Activated CD4-positive, alpha-beta memory T cell treated with anti-CD3 and anti-CD28 coated beads, Interleukin-2, amount 10 ng/mL, durations not matched to agents 7 days and 5 days (primary cell): ENCODE measurements at regions of chr3 and their contacts with region 1.

Region 1: GRCh38 chr3:141487521-141488252 is 860 bp downstream of the RASA2 start:
- DNase-seq: peak; percentile 94
- H3K4me3 Mint-ChIP-seq: peak overlapping the region; percentile 87
- H3K27ac Mint-ChIP-seq: peak overlapping the region; percentile 96
- H3K4me1 Mint-ChIP-seq: peaks cover 70% of the 10 kb centered on the region
- H3K27me3 Mint-ChIP-seq: no peaks in the 10 kb centered on the region

Region 2: DNA sequence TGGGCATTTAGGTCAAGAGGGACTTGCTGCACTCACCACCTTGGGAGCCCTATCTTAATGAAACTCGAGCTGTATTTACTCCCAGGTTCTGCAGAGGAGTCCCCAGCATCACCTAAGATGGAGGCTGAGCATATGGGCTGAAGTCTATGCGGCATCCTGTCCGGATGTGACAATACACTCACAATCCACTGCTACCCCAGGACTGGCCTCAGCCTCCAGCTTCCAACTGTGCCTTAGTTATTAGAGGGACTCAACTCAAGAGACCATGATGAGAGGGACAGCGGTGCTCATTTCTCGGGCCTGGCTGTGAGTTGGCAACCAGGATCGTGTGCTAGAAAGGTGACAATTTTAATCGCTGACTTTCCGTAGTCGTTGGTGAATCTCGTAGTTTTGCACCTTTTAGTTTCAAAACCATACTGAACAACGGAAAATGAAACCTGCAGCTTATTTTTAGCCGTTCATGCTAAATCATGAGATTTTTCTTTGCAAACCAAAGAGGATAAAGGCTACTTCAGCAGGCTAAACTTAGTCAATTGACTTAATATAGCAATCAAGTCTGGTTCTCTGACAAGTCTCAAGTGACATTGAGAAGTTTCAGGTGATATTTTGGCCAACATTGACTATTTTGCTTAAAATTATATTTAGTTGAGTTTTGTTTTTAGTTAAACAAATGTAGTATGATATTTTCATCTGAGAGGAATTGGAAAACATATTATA is 108.3 kb before region 1 on chr3:
- CTCF ChIA-PET with region 1: no interaction called
- POLR2A ChIA-PET with region 1: interaction called, 10 read pairs
- DNase-seq: peak; percentile 58
- H3K4me3 Mint-ChIP-seq: peak overlapping the region; percentile 60
- H3K27ac Mint-ChIP-seq: peak overlapping the region; percentile 98
- H3K4me1 Mint-ChIP-seq: peaks cover 63% of the 10 kb centered on the region
- H3K27me3 Mint-ChIP-seq: no peaks in the 10 kb centered on the region

Region 3: GRCh38 chr3:141426404-141427034 is 61.2 kb before region 1 on chr3:
- CTCF ChIA-PET with region 1: no interaction called
- POLR2A ChIA-PET with region 1: no interaction called
- DNase-seq: no peak
- H3K4me3 Mint-ChIP-seq: no peak overlapping the region
- H3K27ac Mint-ChIP-seq: no peak overlapping the region
- H3K4me1 Mint-ChIP-seq: peaks cover 18% of the 10 kb centered on the region
- H3K27me3 Mint-ChIP-seq: no peaks in the 10 kb centered on the region

Region 4: DNA sequence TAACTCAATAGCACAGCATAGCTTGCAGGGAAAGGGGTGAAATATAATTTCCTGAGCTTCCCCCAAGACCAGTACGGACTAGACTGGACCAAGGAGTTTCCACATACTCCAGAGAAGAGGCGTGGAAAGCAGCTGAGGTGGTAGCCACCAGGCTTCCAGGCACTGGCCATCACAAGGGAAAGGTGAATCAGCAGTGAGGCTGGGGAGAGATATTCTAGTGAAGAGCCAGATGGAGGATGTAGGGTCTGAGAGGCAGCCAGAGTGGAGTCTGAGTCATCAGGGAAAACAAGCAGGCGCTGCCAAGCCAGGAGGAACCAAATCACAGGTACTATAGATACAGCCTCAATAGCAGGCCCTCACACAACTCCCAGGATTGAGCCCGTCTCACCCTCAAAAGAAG is 10.5 kb before region 1 on chr3:
- CTCF ChIA-PET with region 1: interaction called, 3 read pairs
- POLR2A ChIA-PET with region 1: interaction called, 12 read pairs
- DNase-seq: no peak
- H3K4me3 Mint-ChIP-seq: no peak overlapping the region
- H3K27ac Mint-ChIP-seq: no peak overlapping the region
- H3K4me1 Mint-ChIP-seq: peaks cover 29% of the 10 kb centered on the region
- H3K27me3 Mint-ChIP-seq: peaks cover 16% of the 10 kb centered on the region

Region 5: DNA sequence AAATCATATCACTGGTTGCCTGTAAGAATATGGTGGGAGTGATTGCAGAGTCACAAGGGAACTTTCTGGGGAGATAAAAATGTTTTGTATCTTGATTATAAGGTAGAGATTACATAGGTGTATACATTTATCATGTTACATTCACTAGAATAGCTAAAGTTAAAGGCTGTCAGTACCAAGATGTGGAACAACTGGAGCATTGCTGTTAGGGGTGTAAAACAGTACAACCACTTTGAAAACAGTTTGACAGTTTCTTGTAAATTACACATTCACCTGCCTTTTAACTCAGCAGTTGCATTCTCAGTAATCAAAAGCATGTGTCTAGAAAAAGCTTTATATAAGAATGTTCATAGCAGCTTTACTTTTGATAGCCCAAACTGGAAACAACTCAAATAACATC is 26.7 kb after region 1 on chr3:
- CTCF ChIA-PET with region 1: no interaction called
- POLR2A ChIA-PET with region 1: interaction called, 12 read pairs
- DNase-seq: no peak
- H3K4me3 Mint-ChIP-seq: no peak overlapping the region
- H3K27ac Mint-ChIP-seq: no peak overlapping the region
- H3K4me1 Mint-ChIP-seq: peaks cover 28% of the 10 kb centered on the region
- H3K27me3 Mint-ChIP-seq: no peaks in the 10 kb centered on the region

Region 6: DNA sequence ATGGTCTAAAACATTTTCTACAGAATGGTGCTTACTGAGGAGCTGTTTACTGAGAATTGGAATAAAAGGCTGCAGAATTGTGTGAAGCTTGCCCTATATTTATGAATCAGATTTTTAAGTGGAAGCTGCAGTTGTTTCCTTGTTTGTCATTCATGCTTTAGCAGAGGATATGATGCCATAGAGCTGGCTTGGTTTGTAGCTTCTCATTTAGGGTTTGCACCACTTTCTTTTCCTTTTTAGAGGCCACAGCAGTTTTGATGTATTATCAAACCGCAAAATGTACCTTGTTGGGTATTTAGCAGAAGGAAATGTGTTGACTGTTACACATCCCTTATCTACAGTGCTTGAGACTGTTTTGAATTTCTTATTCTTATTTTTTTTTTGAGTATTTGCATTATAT is 65.4 kb after region 1 on chr3:
- CTCF ChIA-PET with region 1: interaction called, 12 read pairs
- POLR2A ChIA-PET with region 1: interaction called, 97 read pairs
- DNase-seq: peak; percentile 23
- H3K4me3 Mint-ChIP-seq: no peak overlapping the region
- H3K27ac Mint-ChIP-seq: peak overlapping the region; percentile 92
- H3K4me1 Mint-ChIP-seq: peaks cover 39% of the 10 kb centered on the region
- H3K27me3 Mint-ChIP-seq: no peaks in the 10 kb centered on the region